Endothelial cell of umbilical vein (primary cell): ENCODE measurements at regions of chr20 and their contacts with region 1.

Region 1: GRCh38 chr20:41512624-41513023 is 105.6 kb downstream of the CHD6 start:
- DNase-seq: no peak
- H3K4me3 ChIP-seq: no peak overlapping the region
- H3K27ac ChIP-seq: no peak overlapping the region
- H3K4me1 ChIP-seq: no peaks in the 10 kb centered on the region
- H3K27me3 ChIP-seq: no peaks in the 10 kb centered on the region
- CTCF ChIP-seq: no peak
- POLR2A ChIP-seq: no peak

Region 2: DNA sequence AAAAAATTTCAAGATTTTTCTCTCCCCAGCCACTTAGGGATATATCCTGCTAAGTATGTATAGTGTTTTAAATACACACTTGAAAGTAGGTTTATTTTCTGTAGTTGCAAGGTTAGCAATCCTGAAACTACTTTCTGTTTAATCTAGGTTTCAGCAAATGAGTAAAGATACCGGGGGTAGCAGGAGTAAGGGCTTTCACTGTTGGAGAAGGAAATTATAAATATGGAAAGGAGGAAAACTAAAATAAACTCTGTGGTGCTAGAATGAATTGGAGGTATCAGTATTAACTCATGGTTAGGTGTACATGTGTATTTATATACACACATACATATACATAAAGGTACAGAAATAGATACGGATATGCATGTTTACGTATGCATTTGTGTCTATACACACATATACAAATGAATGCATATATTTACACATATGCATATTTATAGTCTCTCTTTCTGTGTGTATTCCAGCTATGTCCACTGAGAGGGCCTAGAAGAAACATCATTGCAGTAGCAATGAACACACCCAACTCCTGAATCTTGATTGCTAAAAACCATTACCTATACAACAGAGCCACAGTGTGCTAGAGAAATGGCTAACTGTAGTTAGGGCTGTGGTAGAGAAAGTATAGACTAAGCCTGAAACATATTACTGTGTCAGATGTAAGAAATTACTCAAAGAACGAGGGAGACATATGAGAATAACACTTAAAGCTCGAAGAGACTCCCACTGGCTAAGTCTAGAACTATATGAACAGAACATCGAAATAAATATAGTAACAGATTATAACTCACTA is 50.1 kb before region 1 on chr20:
- CTCF ChIA-PET with region 1: no interaction called
- POLR2A ChIA-PET with region 1: no interaction called
- dilution Hi-C with region 1: no loop called
- intact Hi-C with region 1: loop called (anchors 1 kb)
- DNase-seq: no peak
- H3K4me3 ChIP-seq: no peak overlapping the region
- H3K27ac ChIP-seq: no peak overlapping the region
- H3K4me1 ChIP-seq: no peaks in the 10 kb centered on the region
- H3K27me3 ChIP-seq: no peaks in the 10 kb centered on the region
- CTCF ChIP-seq: no peak
- POLR2A ChIP-seq: no peak